Mammary epithelial cell (primary cell): ENCODE measurements at regions of chr13 and their contacts with region 1.

Region 1: DNA sequence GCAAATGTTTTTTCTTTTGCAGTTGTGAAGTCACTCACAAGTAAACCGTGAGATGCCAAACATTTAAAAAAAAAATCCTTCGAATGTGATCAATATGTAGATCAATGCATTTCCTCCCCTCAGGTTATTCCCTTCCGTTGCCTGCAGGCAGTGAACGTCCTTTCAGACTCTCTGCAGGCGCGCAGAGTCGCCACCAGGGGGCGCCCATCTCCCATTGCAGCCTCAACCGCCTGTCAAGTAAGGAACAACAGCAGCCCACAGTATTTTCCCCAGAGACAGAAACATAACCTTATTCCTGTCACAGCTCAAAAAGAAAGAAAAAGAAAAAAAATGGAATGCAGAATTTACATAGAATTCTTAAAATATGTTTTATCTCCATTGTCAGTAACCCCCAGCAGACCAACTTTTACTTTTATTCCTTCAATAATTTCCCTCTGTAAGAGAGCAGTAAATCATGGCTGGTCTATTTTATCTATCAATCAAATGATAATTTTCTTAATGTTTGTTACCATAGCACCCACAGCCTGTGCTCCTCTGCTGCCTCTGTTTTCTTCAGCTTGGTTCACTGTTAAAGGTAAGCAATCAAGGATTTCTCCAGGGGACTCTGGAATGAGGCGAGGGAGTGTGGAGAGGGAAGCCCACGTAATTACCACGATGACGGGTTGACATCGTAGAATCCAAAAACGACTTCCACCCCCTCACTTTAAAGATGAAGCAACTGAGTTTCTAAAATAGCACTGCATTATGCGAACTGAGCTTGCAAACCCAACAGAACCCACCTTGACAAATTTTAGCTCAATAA is 637.6 kb upstream of the ARGLU1 start:
- DNase-seq: peak; percentile 19
- H3K4me3 ChIP-seq: no peak overlapping the region
- H3K27ac ChIP-seq: no peak overlapping the region
- H3K4me1 ChIP-seq: peaks cover 2% of the 10 kb centered on the region
- H3K27me3 ChIP-seq: no peaks in the 10 kb centered on the region
- CTCF ChIP-seq: peak; percentile 93 to 96

Region 2: GRCh38 chr13:107867701-107868661 is 662.5 kb after region 1 on chr13:
- CTCF ChIA-PET with region 1: no interaction called
- dilution Hi-C with region 1: no loop called
- in situ Hi-C with region 1: no loop called
- intact Hi-C with region 1: loop called (anchors 5 kb)
- DNase-seq: peak; percentile 41
- H3K4me3 ChIP-seq: peak overlapping the region in 1 of 3 experiments; percentile 31
- H3K27ac ChIP-seq: no peak overlapping the region
- H3K4me1 ChIP-seq: peaks cover 6% of the 10 kb centered on the region
- H3K27me3 ChIP-seq: peaks cover 26% of the 10 kb centered on the region
- CTCF ChIP-seq: peak; percentile 11 to 42

Region 3: DNA sequence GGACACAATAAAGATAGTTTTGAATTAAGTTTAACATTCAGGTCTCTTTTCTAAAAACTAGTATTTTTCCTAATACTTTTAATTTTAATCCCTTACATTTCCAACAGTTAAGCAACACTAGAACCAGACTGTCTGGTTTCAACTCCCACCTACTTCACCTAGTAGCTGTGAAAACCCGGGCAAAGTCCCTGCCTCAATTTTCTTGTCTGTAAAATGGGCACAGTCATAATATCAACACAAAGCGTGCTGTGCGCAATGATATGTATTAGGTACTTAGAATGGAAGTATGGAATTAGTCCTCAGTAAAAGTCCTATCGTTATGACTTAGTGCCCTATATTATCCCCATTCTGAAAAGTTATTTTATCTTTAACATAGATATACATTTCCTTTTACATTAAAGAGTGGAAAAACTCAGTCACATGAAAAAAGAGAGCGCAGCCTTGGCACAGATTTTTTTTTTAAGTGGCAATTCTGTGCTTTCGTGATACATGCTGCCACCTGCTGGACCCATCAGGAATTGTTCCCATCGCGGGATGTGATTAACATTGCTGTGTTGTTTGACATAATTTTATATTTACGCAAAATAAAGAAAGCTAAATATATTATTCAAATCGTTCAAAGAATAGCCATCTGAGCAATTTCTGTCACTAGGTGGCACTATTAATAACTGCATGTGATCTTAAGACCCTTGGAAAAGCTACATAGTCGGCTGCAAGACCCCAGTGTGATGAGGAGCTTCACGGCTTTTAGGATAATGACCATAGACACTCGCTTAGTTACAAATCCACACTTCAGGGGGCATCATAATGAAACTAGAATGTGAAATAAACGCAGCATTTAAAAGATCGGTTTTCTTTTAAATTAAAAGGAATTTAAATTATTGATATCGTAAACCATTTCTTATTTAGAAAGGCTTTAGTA is 949.9 kb after region 1 on chr13:
- CTCF ChIA-PET with region 1: no interaction called
- dilution Hi-C with region 1: no loop called
- in situ Hi-C with region 1: loop called (anchors 10 to 25 kb)
- intact Hi-C with region 1: no loop called
- DNase-seq: peak; percentile 20
- H3K4me3 ChIP-seq: no peak overlapping the region
- H3K27ac ChIP-seq: no peak overlapping the region
- H3K4me1 ChIP-seq: no peaks in the 10 kb centered on the region
- H3K27me3 ChIP-seq: no peaks in the 10 kb centered on the region
- CTCF ChIP-seq: peak; percentile 79 to 85